ENCODE measurements at regions of chr1 and their contacts with region 1.

Region 1: DNA sequence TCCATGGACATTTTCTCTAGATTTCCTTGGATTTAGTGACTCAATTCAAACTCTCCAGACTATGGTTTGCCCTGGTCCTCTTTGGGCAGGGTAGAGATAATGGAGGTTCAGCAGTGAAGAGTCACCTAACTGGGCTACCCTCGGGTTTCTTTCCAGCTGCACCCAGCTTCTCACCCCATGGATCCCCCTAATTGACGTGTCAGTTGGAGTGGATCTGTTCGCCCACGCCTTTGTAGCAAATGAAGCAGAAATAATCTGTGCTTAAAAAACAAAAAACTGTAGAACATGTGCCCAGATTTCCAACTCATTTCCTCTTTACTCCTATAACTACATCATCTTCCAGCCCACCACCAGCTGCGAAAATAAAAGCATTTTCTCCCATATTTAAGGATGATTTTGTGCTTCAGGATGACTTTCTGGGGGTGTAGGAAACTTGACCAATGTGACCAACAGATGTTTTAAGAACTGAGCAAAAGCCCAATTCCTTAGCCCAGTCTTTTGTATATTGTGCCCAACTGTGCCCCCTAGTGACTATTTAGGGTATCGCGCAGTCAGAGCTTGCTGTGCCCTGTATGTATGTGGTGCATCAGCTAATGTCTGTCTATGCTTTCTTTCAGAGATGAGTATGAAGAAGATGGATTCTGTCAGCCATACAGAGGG is 66.5 kb upstream of the UBE2U start:
- DNase-seq: peak; percentile 31
- ATAC-seq: peak; percentile 91
- H3K4me3 ChIP-seq: no peak overlapping the region
- H3K27ac ChIP-seq: no peak overlapping the region
- H3K4me1 ChIP-seq: no peaks in the 10 kb centered on the region
- H3K27me3 ChIP-seq: no peaks in the 10 kb centered on the region
- CTCF ChIP-seq: peak; percentile 84 to 94 (median 87); a peak in 5 of 6 replicates
- EP300 ChIP-seq: no peak
- POLR2A ChIP-seq: no peak
- RAD21 ChIP-seq: peak; percentile 79

Region 2: GRCh38 chr1:63615768-63616420 is 521.0 kb before region 1 on chr1:
- CTCF ChIA-PET with region 1: interaction called, 18 read pairs
- POLR2A ChIA-PET with region 1: no interaction called
- RAD21 ChIA-PET with region 1: interaction called, 5 read pairs
- SMC1A ChIA-PET with region 1: interaction called, 12 read pairs
- in situ Hi-C with region 1: no loop called
- intact Hi-C with region 1: loop called (anchors 1 kb)
- DNase-seq: peak; percentile 19
- ATAC-seq: peak; percentile 90
- H3K4me3 ChIP-seq: no peak overlapping the region
- H3K27ac ChIP-seq: no peak overlapping the region
- H3K4me1 ChIP-seq: no peaks in the 10 kb centered on the region
- H3K27me3 ChIP-seq: no peaks in the 10 kb centered on the region
- CTCF ChIP-seq: peak; percentile 57 to 79 (median 71); a peak in 5 of 6 replicates
- EP300 ChIP-seq: no peak
- POLR2A ChIP-seq: no peak
- RAD21 ChIP-seq: peak; percentile 76

Region 3: DNA sequence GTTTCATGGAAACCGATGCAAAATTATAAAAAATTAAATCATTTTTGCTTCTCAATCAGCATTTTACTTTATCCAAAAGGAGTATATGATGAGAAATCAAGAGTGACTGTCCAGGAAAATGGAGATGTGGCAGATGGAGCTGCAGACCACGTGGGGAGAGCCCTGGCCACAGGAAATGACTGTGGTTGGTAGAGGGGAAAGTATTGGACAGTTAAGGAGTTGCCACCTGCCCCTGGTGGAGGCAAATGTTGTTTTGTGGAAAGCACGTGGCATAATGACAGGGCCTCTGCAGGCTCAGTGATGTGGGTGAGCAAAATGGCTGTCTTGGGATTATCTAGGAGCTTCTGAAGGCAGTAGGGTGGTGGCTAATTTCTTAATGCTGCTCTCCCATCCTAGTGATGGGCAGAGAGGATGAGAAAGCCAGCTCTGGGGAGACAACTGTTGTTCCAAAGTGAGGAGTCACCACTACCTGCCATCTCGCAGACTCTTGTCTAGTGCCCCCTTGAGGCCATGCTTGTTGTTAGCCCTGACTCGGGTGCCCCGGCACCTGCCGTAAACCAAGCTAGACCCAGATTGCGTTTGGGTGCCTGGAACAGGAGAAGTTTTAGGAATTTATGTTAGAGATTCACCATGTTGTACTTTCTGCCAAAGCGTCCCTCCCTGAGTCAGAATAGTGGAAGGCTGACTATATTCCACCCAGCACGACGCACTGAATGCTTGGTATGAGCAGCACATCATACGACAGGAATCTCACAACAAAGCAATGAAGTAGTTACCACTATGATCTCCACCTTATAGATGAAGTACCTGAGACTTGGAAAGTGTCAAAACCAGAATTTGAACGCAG is 219.1 kb before region 1 on chr1:
- CTCF ChIA-PET with region 1: interaction called, 20 read pairs
- POLR2A ChIA-PET with region 1: no interaction called
- RAD21 ChIA-PET with region 1: interaction called, 3 read pairs
- SMC1A ChIA-PET with region 1: interaction called, 8 read pairs
- in situ Hi-C with region 1: no loop called
- intact Hi-C with region 1: no loop called
- DNase-seq: no peak
- ATAC-seq: peak; percentile 76
- H3K4me3 ChIP-seq: no peak overlapping the region
- H3K27ac ChIP-seq: no peak overlapping the region
- H3K4me1 ChIP-seq: no peaks in the 10 kb centered on the region
- H3K27me3 ChIP-seq: no peaks in the 10 kb centered on the region; a peak in 1 of 4 replicates
- CTCF ChIP-seq: peak; percentile 21 to 55 (median 44); a peak in 4 of 6 replicates
- EP300 ChIP-seq: no peak
- POLR2A ChIP-seq: no peak
- RAD21 ChIP-seq: peak; percentile 41; the same call in 1 of the 2 replicates

Region 4: GRCh38 chr1:64042331-64043100 is 94.4 kb before region 1 on chr1:
- CTCF ChIA-PET with region 1: no interaction called
- POLR2A ChIA-PET with region 1: no interaction called
- RAD21 ChIA-PET with region 1: no interaction called
- SMC1A ChIA-PET with region 1: no interaction called
- in situ Hi-C with region 1: no loop called
- intact Hi-C with region 1: no loop called
- DNase-seq: no peak
- ATAC-seq: no peak
- H3K4me3 ChIP-seq: no peak overlapping the region
- H3K27ac ChIP-seq: no peak overlapping the region
- H3K4me1 ChIP-seq: no peaks in the 10 kb centered on the region
- H3K27me3 ChIP-seq: no peaks in the 10 kb centered on the region
- CTCF ChIP-seq: no peak
- EP300 ChIP-seq: no peak
- POLR2A ChIP-seq: no peak
- RAD21 ChIP-seq: no peak

Region 5: GRCh38 chr1:64092851-64093371 is 44.0 kb before region 1 on chr1:
- CTCF ChIA-PET with region 1: no interaction called
- POLR2A ChIA-PET with region 1: no interaction called
- RAD21 ChIA-PET with region 1: no interaction called
- SMC1A ChIA-PET with region 1: no interaction called
- in situ Hi-C with region 1: no loop called
- intact Hi-C with region 1: no loop called
- DNase-seq: no peak
- ATAC-seq: no peak
- H3K4me3 ChIP-seq: no peak overlapping the region
- H3K27ac ChIP-seq: no peak overlapping the region
- H3K4me1 ChIP-seq: no peaks in the 10 kb centered on the region
- H3K27me3 ChIP-seq: no peaks in the 10 kb centered on the region
- CTCF ChIP-seq: no peak
- EP300 ChIP-seq: no peak
- POLR2A ChIP-seq: no peak
- RAD21 ChIP-seq: no peak

Region 6: GRCh38 chr1:64124704-64125440 is 12.0 kb before region 1 on chr1:
- CTCF ChIA-PET with region 1: interaction called, 12 read pairs
- POLR2A ChIA-PET with region 1: no interaction called
- RAD21 ChIA-PET with region 1: no interaction called
- SMC1A ChIA-PET with region 1: interaction called, 12 read pairs
- in situ Hi-C with region 1: no loop called
- intact Hi-C with region 1: no loop called
- DNase-seq: no peak
- ATAC-seq: no peak
- H3K4me3 ChIP-seq: no peak overlapping the region
- H3K27ac ChIP-seq: no peak overlapping the region
- H3K4me1 ChIP-seq: no peaks in the 10 kb centered on the region
- H3K27me3 ChIP-seq: no peaks in the 10 kb centered on the region; a peak in 1 of 4 replicates
- CTCF ChIP-seq: no peak
- EP300 ChIP-seq: no peak
- POLR2A ChIP-seq: no peak
- RAD21 ChIP-seq: no peak

Region 7: GRCh38 chr1:64186138-64186897 is 49.4 kb after region 1 on chr1:
- CTCF ChIA-PET with region 1: interaction called, 11 read pairs
- POLR2A ChIA-PET with region 1: no interaction called
- RAD21 ChIA-PET with region 1: no interaction called
- SMC1A ChIA-PET with region 1: no interaction called
- in situ Hi-C with region 1: no loop called
- intact Hi-C with region 1: no loop called
- DNase-seq: no peak
- ATAC-seq: no peak
- H3K4me3 ChIP-seq: no peak overlapping the region
- H3K27ac ChIP-seq: no peak overlapping the region
- H3K4me1 ChIP-seq: no peaks in the 10 kb centered on the region
- H3K27me3 ChIP-seq: no peaks in the 10 kb centered on the region
- CTCF ChIP-seq: no peak
- EP300 ChIP-seq: no peak
- POLR2A ChIP-seq: no peak
- RAD21 ChIP-seq: no peak

Region 8: GRCh38 chr1:64242895-64243756 is 106.2 kb after region 1 on chr1:
- CTCF ChIA-PET with region 1: interaction called, 43 read pairs
- POLR2A ChIA-PET with region 1: interaction called, 4 read pairs
- RAD21 ChIA-PET with region 1: interaction called, 16 read pairs
- SMC1A ChIA-PET with region 1: interaction called, 32 read pairs
- in situ Hi-C with region 1: loop called (anchors 5 kb)
- intact Hi-C with region 1: loop called (anchors 2 kb)
- DNase-seq: no peak
- ATAC-seq: peak; percentile 72
- H3K4me3 ChIP-seq: no peak overlapping the region
- H3K27ac ChIP-seq: no peak overlapping the region
- H3K4me1 ChIP-seq: no peaks in the 10 kb centered on the region
- H3K27me3 ChIP-seq: 0 out of 4 replicates have a peak, but pooled peaks cover 0 to 2% of the 10 kb centered on the region in 2 experiments
- CTCF ChIP-seq: peak in 2 of 3 experiments; percentile 11 to 48; a peak in 2 of 6 replicates
- EP300 ChIP-seq: no peak
- POLR2A ChIP-seq: no peak
- RAD21 ChIP-seq: peak; percentile 66